ENCODE measurements at regions of chr11 and their contacts with region 1.

Region 1: GRCh38 chr11:13276832-13277767 is 490 bp upstream of the BMAL1 start:
- DNase-seq: peak; percentile 98
- ATAC-seq: peak; percentile 93
- H3K4me3 Mint-ChIP-seq: peak overlapping the region; percentile 87
- H3K27ac Mint-ChIP-seq: peak overlapping the region; percentile 84
- H3K4me1 Mint-ChIP-seq: peaks cover 43% of the 10 kb centered on the region
- H3K27me3 Mint-ChIP-seq: peaks cover 6% of the 10 kb centered on the region

Region 2: GRCh38 chr11:13289081-13289480 is 12.0 kb after region 1 on chr11:
- CTCF ChIA-PET with region 1: interaction called, 5 read pairs
- POLR2A ChIA-PET with region 1: interaction called, 9 read pairs
- intact Hi-C with region 1: loop called (anchors 1 kb)
- DNase-seq: no peak
- ATAC-seq: no peak
- H3K4me3 Mint-ChIP-seq: no peak overlapping the region
- H3K27ac Mint-ChIP-seq: no peak overlapping the region
- H3K4me1 Mint-ChIP-seq: peaks cover 80% of the 10 kb centered on the region
- H3K27me3 Mint-ChIP-seq: no peaks in the 10 kb centered on the region

Region 3: GRCh38 chr11:13561860-13562259 is 284.8 kb after region 1 on chr11:
- CTCF ChIA-PET with region 1: no interaction called
- POLR2A ChIA-PET with region 1: no interaction called
- intact Hi-C with region 1: no loop called
- DNase-seq: no peak
- ATAC-seq: no peak
- H3K4me3 Mint-ChIP-seq: no peak overlapping the region
- H3K27ac Mint-ChIP-seq: no peak overlapping the region
- H3K4me1 Mint-ChIP-seq: no peaks in the 10 kb centered on the region
- H3K27me3 Mint-ChIP-seq: peaks cover 14% of the 10 kb centered on the region

Measured in activated CD4-positive, alpha-beta T cell treated with anti-CD3 and anti-CD28 coated beads for 36 hours (primary cell).